CD8-positive, alpha-beta memory T cell (primary cell): ENCODE measurements at regions of chrX and their contacts with region 1.

Region 1: GRCh38 chrX:150683536-150684146 is 9.6 kb upstream of the MTMR1 start:
- DNase-seq: peak in 3 of 5 donors; percentile 47 to 55 (median 48)
- H3K4me3 ChIP-seq: no peak overlapping the region
- H3K4me3 Mint-ChIP-seq: no peak overlapping the region
- H3K27ac ChIP-seq: no peak overlapping the region
- H3K27ac Mint-ChIP-seq: no peak overlapping the region
- H3K4me1 ChIP-seq: peaks cover 7% of the 10 kb centered on the region
- H3K4me1 Mint-ChIP-seq: peaks cover 9 to 12% (median 10%) of the 10 kb centered on the region in 3 donors
- H3K27me3 ChIP-seq: no peaks in the 10 kb centered on the region
- H3K27me3 Mint-ChIP-seq: peaks cover 0 to 6% of the 10 kb centered on the region in 2 donors

Region 2: DNA sequence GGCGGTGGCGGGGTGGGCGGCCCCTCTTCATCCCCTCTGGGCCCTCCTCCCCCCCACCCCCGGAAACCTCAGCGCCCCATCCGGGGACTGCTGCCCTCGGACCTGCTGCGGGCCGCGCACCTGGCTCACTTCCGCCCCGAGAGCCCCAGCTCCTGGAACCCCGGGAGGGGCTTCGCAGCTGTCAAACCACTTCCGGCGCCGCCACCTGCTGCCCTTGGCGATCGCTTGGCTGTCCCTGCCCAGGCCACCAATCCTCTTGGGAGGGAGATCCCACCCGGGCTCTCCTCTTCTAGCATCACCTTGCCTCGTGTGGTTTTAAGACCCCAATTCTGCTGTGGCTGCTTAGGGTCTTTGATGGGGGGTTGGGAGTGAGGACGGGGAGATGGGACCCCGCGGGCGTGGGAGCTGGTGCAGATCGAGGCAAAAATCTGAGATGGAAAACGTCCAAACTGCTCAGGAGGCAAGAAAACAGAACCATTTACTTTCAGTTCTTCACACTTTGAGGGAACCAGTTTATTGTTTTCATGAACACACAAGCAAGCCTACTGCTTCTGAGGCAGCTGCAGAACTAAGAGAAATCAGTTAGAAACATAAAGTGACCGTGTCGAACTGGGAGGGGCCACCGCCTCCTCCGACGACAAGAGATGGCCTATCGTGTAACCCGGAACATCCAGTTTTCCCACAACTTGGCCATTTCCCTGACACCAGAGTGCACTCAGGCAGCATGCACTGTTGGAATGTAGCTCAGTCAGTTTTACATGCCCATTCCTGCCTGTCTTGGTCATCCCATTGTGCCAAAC is 10.3 kb after region 1 on chrX:
- CTCF ChIA-PET with region 1: interaction called, 17 read pairs
- POLR2A ChIA-PET with region 1: interaction called, 3 read pairs
- DNase-seq: peak; percentile 53 to 84 (median 68)
- H3K4me3 ChIP-seq: peak overlapping the region; percentile 55
- H3K4me3 Mint-ChIP-seq: peak overlapping the region; percentile 93 to 100 (median 95)
- H3K27ac ChIP-seq: peak overlapping the region; percentile 73
- H3K27ac Mint-ChIP-seq: peak overlapping the region; percentile 97 to 100 (median 98)
- H3K4me1 ChIP-seq: peaks cover 64% of the 10 kb centered on the region
- H3K4me1 Mint-ChIP-seq: peaks cover 55 to 75% (median 58%) of the 10 kb centered on the region in 3 donors
- H3K27me3 ChIP-seq: no peaks in the 10 kb centered on the region
- H3K27me3 Mint-ChIP-seq: peaks cover 0 to 4% of the 10 kb centered on the region in 2 donors

Region 3: GRCh38 chrX:150715184-150715583 is 31.5 kb after region 1 on chrX:
- CTCF ChIA-PET with region 1: interaction called, 23 read pairs
- POLR2A ChIA-PET with region 1: no interaction called
- DNase-seq: no peak
- H3K4me3 ChIP-seq: no peak overlapping the region
- H3K4me3 Mint-ChIP-seq: no peak overlapping the region
- H3K27ac ChIP-seq: no peak overlapping the region
- H3K27ac Mint-ChIP-seq: peak overlapping the region in 4 of 8 donors; percentile 7 to 37 (median 30)
- H3K4me1 ChIP-seq: no peaks in the 10 kb centered on the region
- H3K4me1 Mint-ChIP-seq: peaks cover 13 to 53% (median 44%) of the 10 kb centered on the region in 3 donors
- H3K27me3 ChIP-seq: no peaks in the 10 kb centered on the region
- H3K27me3 Mint-ChIP-seq: no peaks in the 10 kb centered on the region

Region 4: GRCh38 chrX:150727330-150727729 is 43.7 kb after region 1 on chrX:
- CTCF ChIA-PET with region 1: no interaction called
- POLR2A ChIA-PET with region 1: no interaction called
- DNase-seq: no peak
- H3K4me3 ChIP-seq: no peak overlapping the region
- H3K4me3 Mint-ChIP-seq: no peak overlapping the region
- H3K27ac ChIP-seq: no peak overlapping the region
- H3K27ac Mint-ChIP-seq: no peak overlapping the region
- H3K4me1 ChIP-seq: no peaks in the 10 kb centered on the region
- H3K4me1 Mint-ChIP-seq: peaks cover 10 to 28% (median 16%) of the 10 kb centered on the region in 3 donors
- H3K27me3 ChIP-seq: no peaks in the 10 kb centered on the region
- H3K27me3 Mint-ChIP-seq: no peaks in the 10 kb centered on the region